ENCODE measurements at regions of chr1 and their contacts with region 1.

Region 1: DNA sequence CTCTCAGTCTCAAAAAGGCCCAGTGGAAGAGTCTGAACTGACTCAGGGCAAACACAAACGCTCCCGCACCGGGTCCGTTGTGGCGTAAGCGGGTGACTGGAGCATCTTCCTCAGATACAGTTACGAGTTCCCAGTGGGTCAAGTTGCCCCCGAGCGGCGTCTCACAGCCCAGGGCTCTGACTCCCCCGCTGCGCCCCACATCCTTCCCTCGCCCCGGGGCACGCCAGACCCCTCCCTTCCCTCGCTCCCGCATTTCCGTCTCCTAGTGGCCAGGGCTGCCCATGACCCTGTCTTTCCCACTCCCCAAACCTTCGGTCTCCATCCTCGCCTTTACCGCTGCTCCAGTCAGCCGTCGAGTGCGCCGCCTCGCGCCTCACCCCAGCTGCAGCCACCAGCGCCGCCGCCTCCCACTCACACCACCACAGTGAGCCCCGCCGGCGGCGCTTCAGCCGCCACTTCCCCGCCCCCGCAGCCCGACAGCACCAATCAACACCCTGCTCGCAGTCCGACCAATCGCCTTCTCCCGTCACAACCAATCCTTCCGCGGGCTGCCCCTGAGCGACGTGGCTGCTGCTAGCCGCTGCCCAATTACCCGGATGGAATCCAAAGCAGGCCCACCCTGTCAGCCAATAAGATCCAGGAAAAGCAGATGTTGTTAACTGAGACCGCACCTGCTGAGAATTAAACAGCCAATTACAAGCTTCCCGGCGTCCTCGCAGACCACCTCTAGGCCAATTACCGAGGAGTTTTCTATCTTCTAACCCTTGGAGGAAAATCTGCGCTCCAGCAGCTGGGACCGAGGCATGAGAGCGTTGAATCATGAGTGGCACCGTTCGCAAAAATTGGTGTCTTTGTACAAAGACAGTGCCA is at the start of gene TDRKH:
- DNase-seq: peak; percentile 100
- ATAC-seq: peak; percentile 98
- H3K4me3 Mint-ChIP-seq: peak within 1 kb of the TSS; percentile 95
- H3K27ac Mint-ChIP-seq: peak within 1 kb of the TSS; percentile 89
- H3K4me1 Mint-ChIP-seq: peaks cover 18% of the 10 kb centered on the region
- H3K27me3 Mint-ChIP-seq: no peaks in the 10 kb centered on the region
- total RNA-seq, gene TDRKH: 18.4 to 19.9 TPM

Region 2: DNA sequence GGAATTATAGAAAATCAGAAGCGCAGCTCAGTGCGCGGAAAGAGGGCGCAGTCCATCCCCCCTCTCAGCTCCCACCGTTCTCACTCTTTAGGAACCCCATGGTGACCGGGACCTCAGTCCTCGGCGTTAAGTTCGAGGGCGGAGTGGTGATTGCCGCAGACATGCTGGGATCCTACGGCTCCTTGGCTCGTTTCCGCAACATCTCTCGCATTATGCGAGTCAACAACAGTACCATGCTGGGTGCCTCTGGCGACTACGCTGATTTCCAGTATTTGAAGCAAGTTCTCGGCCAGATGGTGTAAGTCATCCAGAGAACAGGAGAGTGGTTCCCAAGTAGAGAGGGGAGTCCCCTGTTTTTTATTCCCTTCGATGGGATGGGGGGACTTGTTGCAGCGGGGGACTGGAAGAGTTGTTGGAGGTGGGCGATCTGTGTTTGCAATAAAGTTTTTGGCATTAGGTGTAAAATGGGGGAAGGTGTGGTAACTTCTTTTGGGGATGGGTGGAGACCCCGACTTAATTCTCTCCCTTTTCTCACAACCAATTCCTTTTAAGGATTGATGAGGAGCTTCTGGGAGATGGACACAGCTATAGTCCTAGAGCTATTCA is 390.3 kb before region 1 on chr1:
- CTCF ChIA-PET with region 1: no interaction called
- POLR2A ChIA-PET with region 1: no interaction called
- intact Hi-C with region 1: loop called in 1 of 2 experiments (anchors 1 kb)
- DNase-seq: peak; percentile 43
- ATAC-seq: peak; percentile 21
- H3K4me3 Mint-ChIP-seq: peak overlapping the region; percentile 88
- H3K27ac Mint-ChIP-seq: peak overlapping the region; percentile 99
- H3K4me1 Mint-ChIP-seq: peaks cover 29% of the 10 kb centered on the region
- H3K27me3 Mint-ChIP-seq: no peaks in the 10 kb centered on the region

Region 3: GRCh38 chr1:151594143-151594625 is 196.1 kb before region 1 on chr1:
- CTCF ChIA-PET with region 1: no interaction called
- POLR2A ChIA-PET with region 1: no interaction called
- intact Hi-C with region 1: loop called in 1 of 2 experiments (anchors 1 kb)
- DNase-seq: peak; percentile 94
- ATAC-seq: peak; percentile 100
- H3K4me3 Mint-ChIP-seq: peak overlapping the region; percentile 53
- H3K27ac Mint-ChIP-seq: peak overlapping the region; percentile 29
- H3K4me1 Mint-ChIP-seq: peaks cover 9% of the 10 kb centered on the region
- H3K27me3 Mint-ChIP-seq: peaks cover 5% of the 10 kb centered on the region

Region 4: GRCh38 chr1:151762941-151763921 is 27.1 kb before region 1 on chr1 and contains the start of gene MRPL9:
- CTCF ChIA-PET with region 1: interaction called, 17 read pairs
- POLR2A ChIA-PET with region 1: interaction called, 6 read pairs
- intact Hi-C with region 1: loop called (anchors 1 kb)
- DNase-seq: peak; percentile 94
- ATAC-seq: peak; percentile 99
- H3K4me3 Mint-ChIP-seq: peak within 1 kb of the TSS; percentile 89
- H3K27ac Mint-ChIP-seq: peak within 1 kb of the TSS; percentile 95
- H3K4me1 Mint-ChIP-seq: peaks cover 24% of the 10 kb centered on the region
- H3K27me3 Mint-ChIP-seq: no peaks in the 10 kb centered on the region
- total RNA-seq, gene MRPL9: 139 to 184 TPM

Region 5: GRCh38 chr1:151820940-151821339 is 30.6 kb after region 1 on chr1:
- CTCF ChIA-PET with region 1: interaction called, 10 read pairs
- POLR2A ChIA-PET with region 1: interaction called, 11 read pairs
- intact Hi-C with region 1: loop called in 1 of 2 experiments (anchors 1 kb)
- DNase-seq: no peak
- ATAC-seq: peak; percentile 36
- H3K4me3 Mint-ChIP-seq: peak overlapping the region; percentile 30
- H3K27ac Mint-ChIP-seq: peak overlapping the region; percentile 83
- H3K4me1 Mint-ChIP-seq: peaks cover 76% of the 10 kb centered on the region
- H3K27me3 Mint-ChIP-seq: no peaks in the 10 kb centered on the region

Region 6: DNA sequence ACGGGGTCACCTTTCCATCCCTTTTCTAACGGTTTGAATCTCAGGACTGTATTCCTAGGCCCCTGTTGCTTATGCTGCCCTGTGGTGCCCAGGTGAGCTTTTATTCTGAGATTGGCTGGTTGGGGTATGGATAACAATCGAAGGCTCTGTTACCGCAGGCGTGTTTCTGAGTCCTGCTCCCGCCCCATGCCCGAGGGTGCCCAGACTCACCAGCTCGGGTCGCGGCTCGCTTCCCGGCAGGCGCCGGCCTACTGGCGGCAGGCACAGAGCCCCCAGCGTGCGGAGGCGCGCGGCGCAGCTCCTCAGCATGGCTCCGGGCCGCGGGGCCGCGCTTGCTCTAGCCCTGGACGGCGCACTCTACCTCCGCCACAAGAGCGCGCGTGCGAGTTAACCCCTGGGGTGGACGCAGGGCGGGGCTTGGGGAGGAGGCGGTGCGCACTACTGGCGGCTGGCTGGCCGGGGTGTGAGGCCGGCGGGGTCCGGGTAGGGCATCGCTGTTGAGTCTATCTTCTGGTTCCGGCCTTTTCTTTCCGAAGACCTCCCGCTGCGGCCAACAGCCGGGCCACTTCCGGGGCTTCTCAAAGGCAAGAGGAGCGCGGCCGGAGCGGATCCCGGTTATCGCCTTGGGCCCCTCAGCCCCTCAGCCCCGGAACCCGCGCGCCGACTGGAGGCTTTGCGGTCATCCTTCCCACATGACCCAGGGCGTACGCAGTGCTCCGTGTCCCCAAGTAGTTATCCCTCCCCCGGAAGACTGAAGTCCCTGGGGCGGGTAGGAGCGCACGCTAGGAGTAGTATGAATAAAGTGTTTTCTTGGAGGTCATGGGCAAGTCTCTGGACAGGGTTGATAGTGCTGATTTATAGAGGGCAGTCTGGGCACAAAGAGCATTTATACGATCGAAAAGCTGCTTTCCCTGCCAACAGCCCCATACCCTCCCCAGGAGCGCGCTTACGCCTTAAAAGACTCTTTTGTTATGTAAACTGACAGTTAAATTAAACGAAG is 119.1 kb after region 1 on chr1 and contains the start of gene THEM4:
- CTCF ChIA-PET with region 1: no interaction called
- POLR2A ChIA-PET with region 1: no interaction called
- intact Hi-C with region 1: loop called in 1 of 2 experiments (anchors 1 kb)
- DNase-seq: peak; percentile 98
- ATAC-seq: peak; percentile 93
- H3K4me3 Mint-ChIP-seq: peak within 1 kb of the TSS; percentile 82
- H3K27ac Mint-ChIP-seq: peak within 1 kb of the TSS; percentile 91
- H3K4me1 Mint-ChIP-seq: peaks cover 42% of the 10 kb centered on the region
- H3K27me3 Mint-ChIP-seq: no peaks in the 10 kb centered on the region
- total RNA-seq, gene THEM4: 23.9 to 26.0 TPM

Region 7: DNA sequence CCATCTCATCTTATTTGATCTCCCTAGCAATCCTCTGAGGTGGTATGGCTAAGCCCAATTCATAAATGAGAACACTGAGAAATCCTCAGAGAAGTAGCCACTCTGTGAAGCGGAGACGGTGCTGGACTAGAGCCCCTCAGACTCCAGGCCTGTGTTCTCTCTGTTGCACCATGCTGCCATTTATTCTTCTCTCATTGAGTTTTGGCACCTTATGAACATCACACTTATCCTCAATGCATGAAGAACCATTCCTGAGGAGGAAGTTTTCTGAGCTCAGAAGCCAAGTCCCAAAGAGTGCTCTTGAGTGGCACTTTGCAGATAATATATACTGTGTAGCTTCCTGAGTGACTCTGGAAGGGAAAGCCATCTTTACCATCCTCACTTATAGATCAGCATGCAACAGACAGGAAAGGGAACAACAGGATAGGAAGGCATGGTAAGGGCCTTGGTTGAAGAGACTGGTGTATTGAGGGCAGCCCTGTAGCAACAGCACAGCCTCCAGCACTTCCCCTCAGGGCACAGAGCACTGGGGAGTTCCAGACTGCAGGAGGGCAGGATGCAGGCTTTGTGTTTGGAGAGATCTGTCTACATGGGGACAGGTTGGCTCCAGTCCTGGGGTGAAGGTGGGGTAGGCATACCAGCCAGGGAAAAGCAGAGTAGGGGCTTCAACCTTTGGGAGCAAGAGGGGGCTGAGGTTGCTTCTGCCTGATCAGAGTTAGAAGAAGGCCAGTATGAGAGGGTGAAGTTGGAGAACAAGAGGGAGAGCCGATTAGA is 625.3 kb after region 1 on chr1:
- CTCF ChIA-PET with region 1: no interaction called
- POLR2A ChIA-PET with region 1: no interaction called
- intact Hi-C with region 1: no loop called
- DNase-seq: no peak
- ATAC-seq: no peak
- H3K4me3 Mint-ChIP-seq: no peak overlapping the region
- H3K27ac Mint-ChIP-seq: no peak overlapping the region
- H3K4me1 Mint-ChIP-seq: no peaks in the 10 kb centered on the region
- H3K27me3 Mint-ChIP-seq: peaks cover 8% of the 10 kb centered on the region